ENCODE measurements at regions of chr18 and their contacts with region 1.

Region 1: DNA sequence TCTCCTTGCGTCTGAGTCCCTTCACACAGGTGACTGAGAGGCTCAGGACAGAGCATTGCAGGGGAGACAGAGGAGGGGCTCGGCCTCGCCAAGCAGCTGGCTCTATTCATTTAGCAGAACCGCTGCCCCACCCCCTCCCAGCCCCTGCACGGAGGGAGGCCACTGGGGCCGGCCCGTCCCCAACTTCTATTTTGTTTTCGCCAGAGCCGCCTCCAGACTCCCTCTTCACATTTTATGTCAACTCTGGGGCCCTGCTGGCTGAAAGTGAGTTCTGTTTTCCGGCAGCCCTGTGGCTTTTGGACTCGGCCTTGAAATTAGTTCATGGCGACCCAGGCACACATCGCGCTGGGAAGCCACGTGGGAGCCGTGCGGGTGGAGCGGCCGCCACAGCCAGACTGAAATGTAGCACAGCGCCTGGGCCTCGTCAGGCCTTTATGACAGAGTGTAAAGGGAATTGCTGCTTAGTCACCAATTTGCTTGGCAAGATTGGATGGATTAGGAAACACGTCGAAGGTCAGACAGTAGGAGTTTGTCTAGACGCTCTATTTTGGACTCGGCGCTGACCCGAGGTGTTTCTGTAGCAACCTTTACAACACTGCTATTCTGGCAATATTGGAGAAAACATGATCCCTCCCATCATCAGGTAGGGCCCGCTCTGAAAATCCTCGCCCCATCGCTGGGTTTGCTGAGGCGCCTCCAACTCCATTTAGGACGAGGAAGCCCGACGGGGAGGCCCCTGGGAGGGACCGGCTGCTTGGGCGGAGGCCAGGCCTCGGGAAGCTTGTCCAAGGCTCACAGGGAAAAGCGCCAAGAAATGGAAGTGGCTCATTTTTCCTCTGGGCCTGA is 90.7 kb upstream of the CTDP1 start:
- DNase-seq: no peak
- H3K4me3 ChIP-seq: peak overlapping the region in 1 of 4 donors; percentile 30
- H3K27ac ChIP-seq: peak overlapping the region in 3 of 4 donors; percentile 30 to 73 (median 50)
- H3K4me1 ChIP-seq: peaks cover 9 to 41% (median 18%) of the 10 kb centered on the region in 3 donors
- H3K27me3 ChIP-seq: peaks cover 0 to 94% (median 0%) of the 10 kb centered on the region in 4 donors
- CTCF ChIP-seq: no peak
- POLR2A ChIP-seq: no peak

Region 2: GRCh38 chr18:79496237-79496977 is 92.5 kb before region 1 on chr18:
- intact Hi-C with region 1: no loop called
- DNase-seq: no peak
- H3K4me3 ChIP-seq: no peak overlapping the region
- H3K27ac ChIP-seq: peak overlapping the region in 2 of 4 donors; percentile 47 to 63
- H3K4me1 ChIP-seq: peaks cover 0 to 12% (median 10%) of the 10 kb centered on the region in 3 donors
- H3K27me3 ChIP-seq: no peaks in the 10 kb centered on the region
- CTCF ChIP-seq: no peak
- POLR2A ChIP-seq: no peak

Region 3: GRCh38 chr18:79630281-79631095 is 41.6 kb after region 1 on chr18:
- intact Hi-C with region 1: loop called (anchors 10 kb)
- DNase-seq: no peak
- H3K4me3 ChIP-seq: no peak overlapping the region
- H3K27ac ChIP-seq: no peak overlapping the region
- H3K4me1 ChIP-seq: peaks cover 0 to 7% (median 2%) of the 10 kb centered on the region in 3 donors
- H3K27me3 ChIP-seq: peaks cover 0 to 34% (median 0%) of the 10 kb centered on the region in 4 donors
- CTCF ChIP-seq: no peak
- POLR2A ChIP-seq: no peak

Region 4: GRCh38 chr18:79687806-79688205 is 98.9 kb after region 1 on chr18:
- intact Hi-C with region 1: no loop called
- DNase-seq: no peak
- H3K4me3 ChIP-seq: no peak overlapping the region
- H3K27ac ChIP-seq: no peak overlapping the region
- H3K4me1 ChIP-seq: peaks cover 0 to 20% (median 2%) of the 10 kb centered on the region in 3 donors
- H3K27me3 ChIP-seq: no peaks in the 10 kb centered on the region
- CTCF ChIP-seq: no peak
- POLR2A ChIP-seq: no peak